ENCODE measurements at regions of chr9 and their contacts with region 1.

Region 1: GRCh38 chr9:128361986-128362646 is 9.1 kb upstream of the URM1 start:
- DNase-seq: peak; percentile 85
- ATAC-seq: peak; percentile 93
- H3K4me3 Mint-ChIP-seq: peak overlapping the region; percentile 62
- H3K27ac Mint-ChIP-seq: peak overlapping the region; percentile 59
- H3K4me1 Mint-ChIP-seq: peaks cover 19% of the 10 kb centered on the region
- H3K27me3 Mint-ChIP-seq: no peaks in the 10 kb centered on the region

Region 2: GRCh38 chr9:128231638-128232527 is 130.2 kb before region 1 on chr9:
- CTCF ChIA-PET with region 1: no interaction called
- POLR2A ChIA-PET with region 1: no interaction called
- intact Hi-C with region 1: no loop called
- DNase-seq: peak; percentile 36
- ATAC-seq: peak; percentile 55
- H3K4me3 Mint-ChIP-seq: no peak overlapping the region
- H3K27ac Mint-ChIP-seq: no peak overlapping the region
- H3K4me1 Mint-ChIP-seq: no peaks in the 10 kb centered on the region
- H3K27me3 Mint-ChIP-seq: no peaks in the 10 kb centered on the region

Region 3: GRCh38 chr9:128265348-128265847 is 96.7 kb before region 1 on chr9:
- CTCF ChIA-PET with region 1: no interaction called
- POLR2A ChIA-PET with region 1: no interaction called
- intact Hi-C with region 1: no loop called
- DNase-seq: no peak
- ATAC-seq: no peak
- H3K4me3 Mint-ChIP-seq: no peak overlapping the region
- H3K27ac Mint-ChIP-seq: no peak overlapping the region
- H3K4me1 Mint-ChIP-seq: no peaks in the 10 kb centered on the region
- H3K27me3 Mint-ChIP-seq: no peaks in the 10 kb centered on the region

Region 4: GRCh38 chr9:128296337-128297220 is 65.5 kb before region 1 on chr9:
- CTCF ChIA-PET with region 1: interaction called, 3 read pairs
- POLR2A ChIA-PET with region 1: no interaction called
- intact Hi-C with region 1: loop called in 1 of 2 experiments (anchors 1 kb)
- DNase-seq: no peak
- ATAC-seq: no peak
- H3K4me3 Mint-ChIP-seq: no peak overlapping the region
- H3K27ac Mint-ChIP-seq: no peak overlapping the region
- H3K4me1 Mint-ChIP-seq: no peaks in the 10 kb centered on the region
- H3K27me3 Mint-ChIP-seq: no peaks in the 10 kb centered on the region

Region 5: DNA sequence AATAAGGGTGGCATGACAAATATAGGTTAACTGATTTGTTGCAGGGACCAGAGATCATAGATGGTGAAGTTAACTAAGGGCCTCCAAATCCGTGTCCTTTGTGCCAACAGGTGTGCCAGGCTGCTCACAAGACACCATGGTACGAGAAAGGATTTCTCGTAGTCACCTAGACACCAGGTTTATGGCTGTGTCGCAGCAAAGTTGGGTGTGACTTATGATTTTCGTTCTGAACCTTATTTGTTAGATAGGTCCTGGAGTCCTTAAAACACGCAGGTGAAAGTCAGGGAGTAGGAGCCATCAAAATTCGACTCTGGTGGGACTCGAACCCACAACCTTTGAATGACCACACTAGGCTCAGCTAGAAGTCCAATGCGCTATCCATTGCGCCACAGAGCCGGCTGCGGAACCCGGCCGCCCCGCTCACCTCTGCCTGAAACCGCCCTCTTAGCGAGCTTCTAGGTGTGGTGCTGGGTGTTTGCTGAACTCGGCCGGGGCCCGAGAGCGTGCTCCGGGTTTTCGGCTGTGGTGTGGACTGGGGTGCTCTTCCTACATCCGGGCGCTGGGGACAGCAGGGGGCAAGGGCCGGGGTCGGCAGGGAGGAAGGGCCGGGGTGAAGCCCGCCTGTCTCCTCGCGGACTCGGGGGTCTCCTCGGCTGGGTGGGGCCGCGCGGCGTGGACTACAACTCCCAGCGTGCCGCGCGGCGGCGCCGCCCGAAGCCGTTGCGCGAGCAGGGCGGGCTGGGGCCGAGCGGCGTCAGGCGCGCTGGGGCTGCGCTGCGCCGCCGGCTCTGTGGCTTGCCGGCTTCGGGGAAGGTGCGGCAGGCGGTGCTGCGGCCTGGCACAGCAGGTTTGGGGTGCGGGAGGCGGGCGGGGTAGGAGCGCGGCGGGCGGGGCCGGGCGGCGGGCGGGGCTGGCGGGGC is 22.1 kb before region 1 on chr9 and contains the start of gene SLC27A4:
- CTCF ChIA-PET with region 1: interaction called, 13 read pairs
- POLR2A ChIA-PET with region 1: interaction called, 3 read pairs
- intact Hi-C with region 1: no loop called
- DNase-seq: peak; percentile 88
- ATAC-seq: peak; percentile 93
- H3K4me3 Mint-ChIP-seq: peak within 1 kb of the TSS; percentile 88
- H3K27ac Mint-ChIP-seq: peak within 1 kb of the TSS; percentile 83
- H3K4me1 Mint-ChIP-seq: peaks cover 6% of the 10 kb centered on the region
- H3K27me3 Mint-ChIP-seq: no peaks in the 10 kb centered on the region
- total RNA-seq, gene SLC27A4: 8.4 to 10.2 TPM

Region 6: DNA sequence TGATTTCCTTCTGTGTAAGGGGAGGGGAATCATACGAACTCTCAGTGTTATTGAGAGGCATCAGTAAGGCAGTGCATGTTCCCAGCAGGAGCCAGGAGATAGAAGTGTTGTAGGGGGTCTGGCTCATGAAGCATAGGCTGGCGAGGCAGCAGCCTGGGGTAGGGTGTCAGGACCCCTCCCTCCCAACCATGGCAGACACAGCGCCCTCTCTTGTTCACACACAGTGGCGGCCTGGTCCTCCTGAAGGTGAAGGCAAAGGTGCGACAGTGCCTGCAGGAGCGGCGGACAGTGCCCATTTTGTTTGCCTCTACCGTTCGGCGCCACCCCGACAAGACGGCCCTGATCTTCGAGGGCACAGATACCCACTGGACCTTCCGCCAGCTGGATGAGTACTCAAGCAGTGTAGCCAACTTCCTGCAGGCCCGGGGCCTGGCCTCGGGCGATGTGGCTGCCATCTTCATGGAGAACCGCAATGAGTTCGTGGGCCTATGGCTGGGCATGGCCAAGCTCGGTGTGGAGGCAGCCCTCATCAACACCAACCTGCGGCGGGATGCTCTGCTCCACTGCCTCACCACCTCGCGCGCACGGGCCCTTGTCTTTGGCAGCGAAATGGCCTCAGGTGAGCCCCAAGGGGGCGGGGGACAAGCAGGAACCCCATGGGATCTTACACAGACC is 17.0 kb before region 1 on chr9:
- CTCF ChIA-PET with region 1: interaction called, 13 read pairs
- POLR2A ChIA-PET with region 1: interaction called, 3 read pairs
- intact Hi-C with region 1: no loop called
- DNase-seq: no peak
- ATAC-seq: no peak
- H3K4me3 Mint-ChIP-seq: no peak overlapping the region
- H3K27ac Mint-ChIP-seq: no peak overlapping the region
- H3K4me1 Mint-ChIP-seq: peaks cover 4% of the 10 kb centered on the region
- H3K27me3 Mint-ChIP-seq: no peaks in the 10 kb centered on the region

Region 7: GRCh38 chr9:128412120-128412790 is 50.1 kb after region 1 on chr9:
- CTCF ChIA-PET with region 1: interaction called, 36 read pairs
- POLR2A ChIA-PET with region 1: no interaction called
- intact Hi-C with region 1: loop called (anchors 1 to 2 kb)
- DNase-seq: peak; percentile 78
- ATAC-seq: peak; percentile 53
- H3K4me3 Mint-ChIP-seq: no peak overlapping the region
- H3K27ac Mint-ChIP-seq: no peak overlapping the region
- H3K4me1 Mint-ChIP-seq: no peaks in the 10 kb centered on the region
- H3K27me3 Mint-ChIP-seq: peaks cover 49% of the 10 kb centered on the region

Region 8: DNA sequence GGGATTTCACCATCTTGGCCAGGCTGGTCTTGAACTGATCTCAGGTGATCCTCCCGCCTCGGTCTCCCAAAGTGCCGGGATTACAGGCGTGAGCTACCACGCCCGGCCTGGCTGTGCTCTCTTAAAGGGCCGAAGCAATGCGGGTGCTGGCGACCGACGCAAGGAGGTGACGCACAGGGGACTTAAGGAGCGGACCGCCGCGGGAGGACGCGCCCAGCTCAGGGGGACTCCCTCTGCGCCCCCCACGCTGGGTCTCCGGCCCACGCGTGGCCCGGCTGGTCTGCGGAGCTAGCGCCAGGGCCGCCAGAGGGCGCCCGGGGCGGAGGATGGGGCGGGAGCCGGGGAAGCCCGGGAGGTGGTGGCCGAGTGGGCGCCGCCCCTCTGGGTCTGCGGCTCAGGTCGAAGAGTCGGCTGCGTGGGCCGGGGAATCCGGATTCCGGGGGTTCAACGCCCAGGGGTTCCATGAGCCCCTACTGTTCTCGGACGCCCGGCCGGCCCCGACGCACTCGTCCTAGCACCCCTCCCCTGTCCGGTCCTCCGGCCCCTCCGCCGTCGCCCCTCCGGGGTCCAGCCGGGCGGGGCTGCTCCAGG is 58.0 kb after region 1 on chr9:
- CTCF ChIA-PET with region 1: interaction called, 15 read pairs
- POLR2A ChIA-PET with region 1: interaction called, 3 read pairs
- intact Hi-C with region 1: loop called in 1 of 2 experiments (anchors 2 kb)
- DNase-seq: peak; percentile 79
- ATAC-seq: peak; percentile 75
- H3K4me3 Mint-ChIP-seq: peak overlapping the region; percentile 59
- H3K27ac Mint-ChIP-seq: no peak overlapping the region
- H3K4me1 Mint-ChIP-seq: peaks cover 10% of the 10 kb centered on the region
- H3K27me3 Mint-ChIP-seq: peaks cover 25% of the 10 kb centered on the region

Region 9: GRCh38 chr9:128504485-128505413 is 142.6 kb after region 1 on chr9 and contains the start of gene GLE1:
- CTCF ChIA-PET with region 1: interaction called, 9 read pairs
- POLR2A ChIA-PET with region 1: no interaction called
- intact Hi-C with region 1: loop called in 1 of 2 experiments (anchors 2 kb)
- DNase-seq: peak; percentile 98
- ATAC-seq: peak; percentile 99
- H3K4me3 Mint-ChIP-seq: peak within 1 kb of the TSS; percentile 95
- H3K27ac Mint-ChIP-seq: peak within 1 kb of the TSS; percentile 99
- H3K4me1 Mint-ChIP-seq: peaks cover 21% of the 10 kb centered on the region
- H3K27me3 Mint-ChIP-seq: no peaks in the 10 kb centered on the region
- total RNA-seq, gene GLE1: 52.5 to 54.4 TPM